Common myeloid progenitor, CD34-positive (primary cell): ENCODE measurements at regions of chr22 and their contacts with region 1.

Region 1: GRCh38 chr22:41381329-41382097 is at the start of gene TEF:
- DNase-seq: peak; percentile 98 to 99 (median 99)
- H3K4me3 ChIP-seq: peak within 1 kb of the TSS; percentile 52 to 89 (median 72)
- H3K27ac ChIP-seq: peak within 1 kb of the TSS; percentile 54 to 86
- H3K4me1 ChIP-seq: peaks cover 0 to 22% (median 16%) of the 10 kb centered on the region in 4 experiments
- H3K27me3 ChIP-seq: peaks cover 0 to 2% (median 0%) of the 10 kb centered on the region in 5 experiments

Region 2: DNA sequence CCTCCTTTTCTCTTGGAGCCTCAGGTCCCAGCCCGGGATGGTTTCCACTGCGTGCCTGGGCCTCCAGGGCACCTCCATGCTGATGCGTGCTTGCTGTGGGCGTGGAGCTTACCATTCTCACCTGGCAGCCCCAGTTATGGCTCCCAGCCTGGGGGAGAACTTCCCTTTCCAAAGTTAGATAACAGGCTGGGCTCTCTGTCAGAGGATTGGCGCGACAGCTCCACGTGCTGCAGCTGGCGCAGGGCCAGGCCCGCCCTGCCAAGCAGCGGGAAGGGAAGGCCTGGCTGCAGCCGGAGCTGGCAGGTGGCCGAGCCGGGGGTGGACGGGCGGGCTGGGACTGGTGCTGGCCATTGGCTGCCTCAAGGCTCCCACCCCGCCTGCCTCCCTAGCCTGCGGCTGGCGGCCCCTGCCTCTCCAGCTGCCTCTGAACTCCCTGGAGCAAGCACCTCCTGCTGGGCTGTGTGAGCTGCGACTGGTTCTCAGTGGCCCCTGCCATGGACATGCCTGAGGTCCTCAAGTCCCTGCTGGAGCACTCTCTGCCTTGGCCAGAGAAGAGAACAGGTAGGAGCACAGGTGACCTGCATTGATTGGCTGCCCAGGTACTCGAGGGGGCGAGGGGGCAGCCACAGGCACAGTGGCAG is 14.4 kb before region 1 on chr22:
- CTCF ChIA-PET with region 1: interaction called, 12 read pairs
- POLR2A ChIA-PET with region 1: interaction called, 5 read pairs
- DNase-seq: peak; percentile 74 to 87 (median 84)
- H3K4me3 ChIP-seq: peak overlapping the region in 6 of 7 experiments; percentile 19 to 69 (median 50)
- H3K27ac ChIP-seq: no peak overlapping the region
- H3K4me1 ChIP-seq: peaks cover 0 to 18% (median 16%) of the 10 kb centered on the region in 4 experiments
- H3K27me3 ChIP-seq: no peaks in the 10 kb centered on the region

Region 3: DNA sequence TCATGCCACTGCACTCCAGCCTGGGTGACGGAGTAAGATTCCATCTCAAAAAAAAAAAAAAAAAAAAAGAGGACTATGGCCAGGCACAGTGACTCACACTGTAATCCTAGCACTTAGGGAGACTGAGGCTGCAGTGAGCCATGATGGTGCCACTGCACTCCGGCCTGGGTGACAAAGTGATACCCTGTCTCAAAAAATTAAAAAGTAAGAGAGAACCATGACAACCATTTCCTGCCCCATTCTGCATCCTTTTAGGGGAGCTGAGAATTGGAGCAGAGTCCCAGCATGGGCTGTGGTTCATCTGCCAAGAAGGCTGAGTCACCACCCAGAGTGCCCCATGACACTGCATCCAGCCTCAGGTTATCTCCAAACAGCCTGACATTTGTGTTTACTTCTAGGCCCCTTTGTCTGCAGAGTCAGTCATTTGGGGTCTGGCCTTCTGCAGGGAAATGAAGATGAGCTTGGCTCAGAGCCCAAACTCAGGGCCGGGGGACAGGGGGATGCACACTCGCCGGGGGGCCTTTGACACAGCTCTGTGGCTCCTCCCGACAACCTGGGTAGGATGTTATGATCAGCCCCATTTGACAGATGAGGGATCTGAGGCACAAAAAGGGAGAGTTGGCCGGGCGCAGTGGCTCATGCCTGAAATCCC is 184.0 kb after region 1 on chr22:
- CTCF ChIA-PET with region 1: no interaction called
- POLR2A ChIA-PET with region 1: no interaction called
- DNase-seq: peak; percentile 66 to 93 (median 91)
- H3K4me3 ChIP-seq: no peak overlapping the region
- H3K27ac ChIP-seq: no peak overlapping the region
- H3K4me1 ChIP-seq: peaks cover 0 to 7% (median 0%) of the 10 kb centered on the region in 4 experiments
- H3K27me3 ChIP-seq: peaks cover 0 to 41% (median 18%) of the 10 kb centered on the region in 5 experiments